ENCODE measurements at regions of chr6 and their contacts with region 1.

Region 1: GRCh38 chr6:20401205-20402091 is at the start of gene E2F3:
- DNase-seq: peak; percentile 93 to 99 (median 99)
- ATAC-seq: peak; percentile 90
- H3K4me3 ChIP-seq: peak within 1 kb of the TSS; percentile 89
- H3K4me3 Mint-ChIP-seq: peak within 1 kb of the TSS; percentile 90 to 98 (median 93)
- H3K27ac ChIP-seq: peak within 1 kb of the TSS; percentile 75
- H3K27ac Mint-ChIP-seq: peak within 1 kb of the TSS; percentile 74 to 95 (median 83)
- H3K4me1 ChIP-seq: peaks cover 4 to 27% of the 10 kb centered on the region in 2 donors
- H3K4me1 Mint-ChIP-seq: peaks cover 18 to 50% (median 33%) of the 10 kb centered on the region in 7 donors
- H3K27me3 ChIP-seq: no peaks in the 10 kb centered on the region
- H3K27me3 Mint-ChIP-seq: peaks cover 0 to 3% (median 0%) of the 10 kb centered on the region in 5 donors
- total RNA-seq, gene E2F3: 5.1 to 39.2 (median 30.8) TPM

Region 2: GRCh38 chr6:20291764-20292580 is 109.5 kb before region 1 on chr6:
- CTCF ChIA-PET with region 1: interaction called, 14 read pairs
- POLR2A ChIA-PET with region 1: interaction called, 9 read pairs
- intact Hi-C with region 1: loop called (anchors 1 kb)
- DNase-seq: peak; percentile 36 to 72 (median 62)
- ATAC-seq: peak; percentile 94
- H3K4me3 ChIP-seq: no peak overlapping the region
- H3K4me3 Mint-ChIP-seq: peak overlapping the region in 5 of 10 donors; percentile 1 to 54 (median 44)
- H3K27ac ChIP-seq: no peak overlapping the region
- H3K27ac Mint-ChIP-seq: peak overlapping the region in 4 of 9 donors; percentile 3 to 44 (median 22)
- H3K4me1 ChIP-seq: peaks cover 8 to 15% of the 10 kb centered on the region in 2 donors
- H3K4me1 Mint-ChIP-seq: peaks cover 6 to 34% (median 25%) of the 10 kb centered on the region in 7 donors
- H3K27me3 ChIP-seq: no peaks in the 10 kb centered on the region
- H3K27me3 Mint-ChIP-seq: peaks cover 0 to 6% (median 0%) of the 10 kb centered on the region in 5 donors

Region 3: DNA sequence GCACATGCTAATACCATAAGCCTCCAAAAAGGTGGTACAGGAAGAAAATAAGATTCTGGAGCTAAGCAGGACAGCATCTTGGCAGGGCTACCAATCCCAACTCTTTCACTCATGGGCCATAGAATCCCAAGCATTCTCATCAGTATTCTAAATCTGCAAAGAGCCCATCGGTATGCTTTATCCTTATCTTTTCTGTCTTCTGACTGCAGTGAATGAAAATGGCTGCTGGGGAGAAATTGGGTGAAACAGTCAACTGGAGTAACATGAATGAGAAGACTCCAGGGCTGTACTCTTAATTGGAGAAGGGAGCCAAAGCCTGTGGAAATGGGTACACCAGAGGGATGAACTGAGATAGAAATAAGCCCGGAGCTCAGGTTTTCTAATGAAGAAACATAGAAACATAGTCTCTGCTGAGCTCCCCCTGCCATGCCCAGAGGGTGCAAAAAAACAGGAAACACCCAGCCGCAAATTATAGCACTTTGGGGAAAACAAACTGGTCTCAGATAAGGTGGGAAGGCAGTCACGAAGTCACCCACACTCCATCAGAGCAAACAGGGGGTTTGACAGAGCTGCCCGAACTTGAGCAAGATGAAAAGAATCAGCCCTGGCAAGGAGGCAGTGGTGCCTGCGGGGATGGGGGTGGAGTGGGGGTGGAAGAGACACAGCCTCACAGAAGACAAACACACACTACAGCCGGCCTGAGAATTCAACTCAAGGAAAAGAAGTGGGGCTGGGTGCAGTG is 35.2 kb before region 1 on chr6:
- CTCF ChIA-PET with region 1: interaction called, 15 read pairs
- POLR2A ChIA-PET with region 1: interaction called, 72 read pairs
- intact Hi-C with region 1: loop called (anchors 1 kb)
- DNase-seq: peak in 8 of 9 donors; percentile 25 to 79 (median 66)
- ATAC-seq: peak; percentile 82
- H3K4me3 ChIP-seq: peak overlapping the region; percentile 15
- H3K4me3 Mint-ChIP-seq: peak overlapping the region; percentile 79 to 92 (median 84)
- H3K27ac ChIP-seq: peak overlapping the region; percentile 65
- H3K27ac Mint-ChIP-seq: peak overlapping the region; percentile 91 to 99 (median 97)
- H3K4me1 ChIP-seq: peaks cover 55 to 56% of the 10 kb centered on the region in 2 donors
- H3K4me1 Mint-ChIP-seq: peaks cover 48 to 73% (median 65%) of the 10 kb centered on the region in 7 donors
- H3K27me3 ChIP-seq: no peaks in the 10 kb centered on the region
- H3K27me3 Mint-ChIP-seq: no peaks in the 10 kb centered on the region

Region 4: GRCh38 chr6:20414711-20415110 is 13.3 kb after region 1 on chr6:
- CTCF ChIA-PET with region 1: interaction called, 4 read pairs
- POLR2A ChIA-PET with region 1: interaction called, 10 read pairs
- intact Hi-C with region 1: no loop called
- DNase-seq: no peak
- ATAC-seq: no peak
- H3K4me3 ChIP-seq: no peak overlapping the region
- H3K4me3 Mint-ChIP-seq: peak overlapping the region in 1 of 10 donors; percentile 21
- H3K27ac ChIP-seq: no peak overlapping the region
- H3K27ac Mint-ChIP-seq: peak overlapping the region in 1 of 9 donors; percentile 14
- H3K4me1 ChIP-seq: peaks cover 21 to 47% of the 10 kb centered on the region in 2 donors
- H3K4me1 Mint-ChIP-seq: peaks cover 47 to 76% (median 68%) of the 10 kb centered on the region in 7 donors
- H3K27me3 ChIP-seq: no peaks in the 10 kb centered on the region
- H3K27me3 Mint-ChIP-seq: no peaks in the 10 kb centered on the region

Region 5: DNA sequence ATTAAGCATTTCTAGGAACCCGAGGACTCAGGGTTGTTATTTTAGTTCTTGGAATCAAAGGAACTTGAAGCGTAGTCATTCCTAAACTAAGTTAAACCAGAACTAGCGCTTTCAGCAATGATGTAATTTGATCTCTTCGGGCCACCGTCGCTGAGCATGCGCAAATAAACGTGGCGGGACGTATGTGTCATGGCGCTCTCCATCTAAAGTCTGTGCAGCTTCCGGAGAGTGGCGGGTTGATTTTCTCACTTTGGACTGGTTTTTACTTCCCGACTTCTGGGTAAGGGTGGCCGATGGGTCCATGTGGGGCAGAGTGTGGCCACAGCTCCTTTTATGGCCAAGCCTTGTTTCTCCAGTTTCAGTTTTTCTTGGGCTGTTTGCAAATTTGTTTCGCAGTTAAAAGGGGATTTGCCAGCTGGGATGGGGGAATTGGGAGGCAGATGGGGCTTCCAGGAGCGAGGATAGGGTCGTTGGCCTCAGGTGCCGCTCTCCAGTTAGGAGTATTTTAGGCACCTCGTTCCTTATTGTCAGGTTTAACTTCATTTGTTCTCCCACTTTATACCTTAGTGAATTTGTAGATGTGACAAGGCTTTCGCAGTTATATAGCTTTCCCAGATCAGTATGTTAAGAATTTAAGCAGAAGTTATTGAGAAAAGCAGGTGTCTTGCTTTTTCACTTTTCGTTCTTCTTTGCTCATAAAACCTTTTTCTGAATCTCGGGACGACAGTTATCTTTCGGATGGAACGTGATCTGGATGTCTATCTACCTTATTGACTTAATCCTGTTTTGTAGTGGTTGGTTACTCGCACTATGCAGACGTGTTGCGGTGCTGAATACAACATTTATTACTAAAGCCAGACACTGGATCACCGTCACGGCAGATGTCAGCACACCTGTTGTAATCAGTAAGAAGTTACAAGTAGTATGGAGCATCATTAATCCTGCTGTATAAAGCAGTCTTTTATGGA is 133.1 kb after region 1 on chr6 and contains the start of gene CDKAL1:
- CTCF ChIA-PET with region 1: interaction called, 15 read pairs
- POLR2A ChIA-PET with region 1: interaction called, 7 read pairs
- intact Hi-C with region 1: loop called (anchors 1 kb)
- DNase-seq: peak; percentile 69 to 89 (median 86)
- ATAC-seq: peak; percentile 95
- H3K4me3 ChIP-seq: peak within 1 kb of the TSS; percentile 92
- H3K4me3 Mint-ChIP-seq: peak within 1 kb of the TSS; percentile 88 to 100 (median 97)
- H3K27ac ChIP-seq: peak within 1 kb of the TSS; percentile 89
- H3K27ac Mint-ChIP-seq: peak within 1 kb of the TSS; percentile 94 to 100 (median 99)
- H3K4me1 ChIP-seq: peaks cover 0 to 11% of the 10 kb centered on the region in 2 donors
- H3K4me1 Mint-ChIP-seq: peaks cover 22 to 53% (median 41%) of the 10 kb centered on the region in 7 donors
- H3K27me3 ChIP-seq: no peaks in the 10 kb centered on the region
- H3K27me3 Mint-ChIP-seq: peaks cover 0 to 4% (median 0%) of the 10 kb centered on the region in 5 donors
- total RNA-seq, gene CDKAL1: 23.6 to 30.3 (median 25.0) TPM